Activated CD4-positive, alpha-beta memory T cell treated with anti-CD3 and anti-CD28 coated beads for 36 hours (primary cell): ENCODE measurements at regions of chr12 and their contacts with region 1.

Region 1: GRCh38 chr12:6792522-6793201 is 3.3 kb downstream of the CD4 start:
- DNase-seq: peak; percentile 55
- H3K4me3 Mint-ChIP-seq: peak overlapping the region; percentile 91
- H3K27ac Mint-ChIP-seq: peak overlapping the region; percentile 95
- H3K4me1 Mint-ChIP-seq: peaks cover 54% of the 10 kb centered on the region
- H3K27me3 Mint-ChIP-seq: no peaks in the 10 kb centered on the region

Region 2: GRCh38 chr12:6451348-6452244 is 341.1 kb before region 1 on chr12 and contains the start of gene TAPBPL:
- CTCF ChIA-PET with region 1: no interaction called
- POLR2A ChIA-PET with region 1: no interaction called
- intact Hi-C with region 1: loop called (anchors 10 kb)
- DNase-seq: peak; percentile 90
- H3K4me3 Mint-ChIP-seq: peak within 1 kb of the TSS; percentile 99
- H3K27ac Mint-ChIP-seq: peak within 1 kb of the TSS; percentile 100
- H3K4me1 Mint-ChIP-seq: peaks cover 62% of the 10 kb centered on the region
- H3K27me3 Mint-ChIP-seq: no peaks in the 10 kb centered on the region
- total RNA-seq, gene TAPBPL: 33.4 to 35.0 TPM

Region 3: GRCh38 chr12:6723607-6724396 is 68.9 kb before region 1 on chr12 and contains the start of gene COPS7A:
- CTCF ChIA-PET with region 1: interaction called, 4 read pairs
- POLR2A ChIA-PET with region 1: interaction called, 13 read pairs
- intact Hi-C with region 1: loop called (anchors 2 kb)
- DNase-seq: peak; percentile 99
- H3K4me3 Mint-ChIP-seq: peak within 1 kb of the TSS; percentile 83
- H3K27ac Mint-ChIP-seq: peak within 1 kb of the TSS; percentile 84
- H3K4me1 Mint-ChIP-seq: peaks cover 25% of the 10 kb centered on the region
- H3K27me3 Mint-ChIP-seq: no peaks in the 10 kb centered on the region
- total RNA-seq, gene COPS7A: 37.6 to 39.4 TPM

Region 4: GRCh38 chr12:6771091-6771495 is 21.6 kb before region 1 on chr12:
- CTCF ChIA-PET with region 1: interaction called, 47 read pairs
- POLR2A ChIA-PET with region 1: interaction called, 19 read pairs
- intact Hi-C with region 1: loop called (anchors 2 kb)
- DNase-seq: peak; percentile 55
- H3K4me3 Mint-ChIP-seq: no peak overlapping the region
- H3K27ac Mint-ChIP-seq: peak overlapping the region; percentile 84
- H3K4me1 Mint-ChIP-seq: peaks cover 57% of the 10 kb centered on the region
- H3K27me3 Mint-ChIP-seq: peaks cover 13% of the 10 kb centered on the region

Region 5: GRCh38 chr12:6825398-6826124 is 32.9 kb after region 1 on chr12:
- CTCF ChIA-PET with region 1: interaction called, 12 read pairs
- POLR2A ChIA-PET with region 1: interaction called, 7 read pairs
- intact Hi-C with region 1: loop called (anchors 2 kb)
- DNase-seq: peak; percentile 90
- H3K4me3 Mint-ChIP-seq: no peak overlapping the region
- H3K27ac Mint-ChIP-seq: peak overlapping the region; percentile 16
- H3K4me1 Mint-ChIP-seq: peaks cover 30% of the 10 kb centered on the region
- H3K27me3 Mint-ChIP-seq: peaks cover 29% of the 10 kb centered on the region

Region 6: DNA sequence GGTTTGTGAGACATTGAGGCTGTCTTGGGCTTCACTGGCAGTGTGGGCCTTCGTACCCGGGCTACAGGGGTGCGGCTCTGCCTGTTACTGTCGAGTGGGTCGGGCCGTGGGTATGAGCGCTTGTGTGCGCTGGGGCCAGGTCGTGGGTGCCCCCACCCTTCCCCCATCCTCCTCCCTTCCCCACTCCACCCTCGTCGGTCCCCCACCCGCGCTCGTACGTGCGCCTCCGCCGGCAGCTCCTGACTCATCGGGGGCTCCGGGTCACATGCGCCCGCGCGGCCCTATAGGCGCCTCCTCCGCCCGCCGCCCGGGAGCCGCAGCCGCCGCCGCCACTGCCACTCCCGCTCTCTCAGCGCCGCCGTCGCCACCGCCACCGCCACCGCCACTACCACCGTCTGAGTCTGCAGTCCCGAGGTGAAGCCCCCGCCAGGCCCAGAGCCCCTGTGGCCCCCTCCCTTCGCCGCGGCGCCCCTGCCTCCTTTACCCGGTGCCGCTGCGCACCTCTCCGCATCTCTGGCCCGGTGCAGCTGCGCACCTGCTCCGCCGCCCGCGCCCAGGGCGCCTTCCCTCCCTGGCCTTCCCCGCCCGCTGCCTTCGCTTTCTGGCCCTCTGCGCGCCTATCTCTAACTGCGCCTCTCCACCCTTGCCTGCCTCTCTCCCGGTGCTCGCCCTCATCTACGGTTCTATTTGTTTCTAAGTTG is 121.7 kb after region 1 on chr12 and contains the start of gene ENO2:
- CTCF ChIA-PET with region 1: no interaction called
- POLR2A ChIA-PET with region 1: no interaction called
- intact Hi-C with region 1: no loop called
- DNase-seq: peak; percentile 88
- H3K4me3 Mint-ChIP-seq: peak within 1 kb of the TSS; percentile 92
- H3K27ac Mint-ChIP-seq: peak within 1 kb of the TSS; percentile 88
- H3K4me1 Mint-ChIP-seq: peaks cover 30% of the 10 kb centered on the region
- H3K27me3 Mint-ChIP-seq: no peaks in the 10 kb centered on the region
- total RNA-seq, gene ENO2: 185 to 193 TPM